Heart left ventricle (tissue), 16 donors: ENCODE measurements at regions of chr1 and their contacts with region 1.

Region 1: GRCh38 chr1:59994302-59995198 is 68.0 kb upstream of the CYP2J2 start:
- DNase-seq: peak in 3 of 5 donors; percentile 21 to 37 (median 36)
- ATAC-seq: peak; percentile 84 to 94 (median 87)
- H3K4me3 ChIP-seq: no peak overlapping the region
- H3K27ac ChIP-seq: peak overlapping the region in 5 of 12 donors; percentile 6 to 81 (median 32)
- H3K4me1 ChIP-seq: peaks cover 0 to 10% (median 0%) of the 10 kb centered on the region in 12 donors
- H3K27me3 ChIP-seq: peaks cover 0 to 5% (median 0%) of the 10 kb centered on the region in 9 donors
- CTCF ChIP-seq: no peak
- POLR2A ChIP-seq: no peak

Region 2: DNA sequence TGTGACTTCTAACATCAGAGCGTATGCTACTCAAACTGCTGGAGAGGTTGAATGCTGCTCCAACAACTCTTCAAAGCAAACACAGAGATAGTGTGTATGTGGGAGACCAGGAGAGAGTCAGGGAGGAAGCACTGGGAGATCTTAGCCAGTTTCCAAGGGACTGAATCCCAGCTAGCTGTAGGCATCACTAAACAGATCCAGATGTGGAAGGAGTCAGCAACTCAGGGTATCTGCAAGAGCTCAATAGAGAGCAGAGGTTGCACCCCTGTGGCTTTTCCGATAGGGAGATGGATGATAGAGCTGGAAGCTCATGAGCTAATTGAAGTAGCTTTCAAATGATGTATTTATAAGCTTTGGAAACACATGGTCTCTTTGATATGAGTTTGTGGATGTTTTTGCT is 348.7 kb before region 1 on chr1:
- intact Hi-C with region 1: no loop called
- DNase-seq: no peak
- ATAC-seq: peak in 1 of 4 donors; percentile 33
- H3K4me3 ChIP-seq: no peak overlapping the region
- H3K27ac ChIP-seq: no peak overlapping the region
- H3K4me1 ChIP-seq: no peaks in the 10 kb centered on the region
- H3K27me3 ChIP-seq: no peaks in the 10 kb centered on the region
- CTCF ChIP-seq: no peak
- POLR2A ChIP-seq: no peak

Region 3: DNA sequence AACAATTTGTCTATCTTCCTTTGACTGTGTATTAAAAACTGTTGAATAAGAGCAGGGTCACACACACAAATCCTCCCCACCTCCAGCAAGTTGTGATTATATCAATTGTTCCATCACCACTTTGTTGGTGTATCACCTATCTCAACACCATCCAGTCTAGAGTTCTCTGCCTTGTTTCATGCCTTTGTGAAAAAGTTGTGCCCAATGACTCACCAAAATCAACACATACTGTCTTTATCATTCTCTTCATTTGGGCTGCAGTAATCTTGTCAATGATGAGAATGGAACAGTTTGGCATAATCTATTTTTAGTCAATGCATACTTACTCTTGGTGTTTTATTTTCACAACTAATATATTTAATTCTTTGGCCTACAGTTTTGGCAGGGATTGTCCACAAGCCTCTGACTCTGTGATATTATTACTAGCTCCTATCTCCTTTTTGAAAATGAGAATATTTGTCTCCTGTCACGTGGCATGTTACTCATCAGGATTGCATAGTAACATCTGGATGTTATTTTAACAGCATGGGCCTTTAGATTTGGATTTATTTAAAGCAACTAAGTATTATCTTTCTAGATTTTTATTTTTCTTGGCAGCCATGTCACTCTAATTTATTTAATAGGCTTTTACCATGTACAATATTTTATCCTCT is 74.0 kb after region 1 on chr1:
- intact Hi-C with region 1: loop called in 1 of 10 experiments (anchors 10 kb)
- DNase-seq: no peak
- ATAC-seq: no peak
- H3K4me3 ChIP-seq: no peak overlapping the region
- H3K27ac ChIP-seq: no peak overlapping the region
- H3K4me1 ChIP-seq: peaks cover 0 to 9% (median 0%) of the 10 kb centered on the region in 12 donors
- H3K27me3 ChIP-seq: peaks cover 0 to 10% (median 5%) of the 10 kb centered on the region in 9 donors
- CTCF ChIP-seq: no peak
- POLR2A ChIP-seq: no peak

Region 4: GRCh38 chr1:60171801-60172200 is 177.3 kb after region 1 on chr1:
- intact Hi-C with region 1: no loop called
- DNase-seq: no peak
- ATAC-seq: no peak
- H3K4me3 ChIP-seq: no peak overlapping the region
- H3K27ac ChIP-seq: no peak overlapping the region
- H3K4me1 ChIP-seq: no peaks in the 10 kb centered on the region
- H3K27me3 ChIP-seq: no peaks in the 10 kb centered on the region
- CTCF ChIP-seq: no peak
- POLR2A ChIP-seq: no peak